Left colon (tissue), 2 donors: ENCODE measurements at regions of chr12 and their contacts with region 1.

Region 1: GRCh38 chr12:84889818-84890217 is 22.8 kb downstream of the SLC6A15 start:
- DNase-seq: no peak
- ATAC-seq: no peak

Region 2: GRCh38 chr12:84689638-84690037 is 200.2 kb before region 1 on chr12:
- intact Hi-C with region 1: no loop called
- DNase-seq: peak in 1 of 2 donors; percentile 26
- ATAC-seq: peak; percentile 81

Region 3: DNA sequence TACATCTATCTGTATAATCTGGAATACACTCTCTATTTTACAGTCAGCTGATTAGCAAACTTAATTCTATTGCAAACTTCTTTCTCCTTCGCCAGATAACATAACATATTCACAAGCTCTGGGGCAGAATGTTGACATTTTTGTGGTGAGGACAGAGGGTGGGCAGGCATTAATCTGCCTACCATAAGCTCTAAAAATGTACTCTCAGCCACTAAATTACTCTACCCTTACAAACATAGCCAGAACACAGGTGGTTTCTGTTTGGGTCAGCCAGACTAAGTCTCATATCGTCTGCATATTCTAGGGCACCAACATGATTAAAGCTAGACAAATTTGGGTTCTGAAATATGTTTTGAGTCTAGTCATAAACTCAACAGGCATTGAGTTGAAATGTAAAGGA is 67.3 kb before region 1 on chr12:
- intact Hi-C with region 1: no loop called
- DNase-seq: no peak
- ATAC-seq: no peak

Region 4: GRCh38 chr12:85029456-85029855 is 139.6 kb after region 1 on chr12:
- intact Hi-C with region 1: loop called in 1 of 2 experiments (anchors 10 kb)
- DNase-seq: no peak
- ATAC-seq: no peak